ENCODE measurements at regions of chr7 and their contacts with region 1.

Region 1: DNA sequence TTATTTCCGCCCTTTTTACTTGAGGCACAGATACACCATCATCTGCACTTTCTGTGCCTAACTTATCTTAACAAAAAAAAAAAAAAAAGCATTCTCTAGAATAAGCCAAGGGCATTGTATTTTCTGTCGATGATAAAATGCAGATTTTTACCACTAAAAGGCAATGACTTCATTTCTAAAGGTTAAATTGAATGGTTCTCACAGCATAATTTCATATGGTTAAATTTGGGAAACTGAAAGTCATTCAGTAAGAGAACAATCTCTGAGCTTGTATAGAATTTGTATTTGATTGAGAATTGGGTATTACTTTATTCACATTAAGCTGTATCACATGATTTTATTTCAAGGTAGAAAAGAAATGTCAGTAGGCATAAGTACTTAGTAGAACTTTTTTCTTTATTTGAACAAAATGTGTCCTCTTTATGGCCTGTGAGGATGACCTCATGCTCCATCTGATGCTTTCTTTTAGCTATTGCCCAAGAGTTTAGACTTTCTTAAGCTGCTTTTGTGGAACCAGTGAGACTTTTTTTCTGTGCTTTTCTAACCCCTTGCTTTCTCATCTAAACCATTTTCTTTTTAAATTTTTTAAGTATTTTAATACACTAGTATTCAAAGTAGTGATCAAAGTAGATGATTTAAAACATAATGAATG is 110.3 kb downstream of the LRRC4 start:
- DNase-seq: no peak
- H3K4me3 Mint-ChIP-seq: no peak overlapping the region
- H3K27ac Mint-ChIP-seq: peak overlapping the region; percentile 19
- H3K4me1 Mint-ChIP-seq: peaks cover 16% of the 10 kb centered on the region
- H3K27me3 Mint-ChIP-seq: no peaks in the 10 kb centered on the region

Region 2: DNA sequence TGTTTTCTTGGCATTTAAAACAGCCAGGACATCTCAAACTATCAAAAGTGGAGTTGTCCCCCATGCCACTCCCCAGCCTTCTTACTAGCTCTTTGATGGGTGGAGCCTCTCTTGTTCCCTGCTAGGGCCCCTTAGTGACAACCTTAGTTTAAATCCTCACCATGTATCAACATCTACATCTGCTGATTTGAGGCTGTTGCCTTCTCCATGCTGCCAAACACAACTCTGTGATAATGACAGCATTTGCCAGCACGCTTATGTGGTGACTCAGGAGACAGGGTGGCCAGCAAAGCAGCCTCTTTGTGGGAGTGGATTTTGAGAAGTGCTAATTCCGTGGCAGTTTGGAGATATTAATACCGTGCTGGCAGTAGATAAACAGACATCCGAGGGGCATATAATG is 35.1 kb before region 1 on chr7:
- CTCF ChIA-PET with region 1: no interaction called
- POLR2A ChIA-PET with region 1: no interaction called
- intact Hi-C with region 1: no loop called
- DNase-seq: no peak
- H3K4me3 Mint-ChIP-seq: no peak overlapping the region
- H3K27ac Mint-ChIP-seq: no peak overlapping the region
- H3K4me1 Mint-ChIP-seq: peaks cover 21% of the 10 kb centered on the region
- H3K27me3 Mint-ChIP-seq: no peaks in the 10 kb centered on the region

Region 3: GRCh38 chr7:127905491-127906330 is 15.2 kb before region 1 on chr7:
- CTCF ChIA-PET with region 1: interaction called, 3 read pairs
- POLR2A ChIA-PET with region 1: interaction called, 3 read pairs
- intact Hi-C with region 1: loop called (anchors 2 kb)
- DNase-seq: peak; percentile 49
- H3K4me3 Mint-ChIP-seq: no peak overlapping the region
- H3K27ac Mint-ChIP-seq: peak overlapping the region; percentile 8
- H3K4me1 Mint-ChIP-seq: peaks cover 59% of the 10 kb centered on the region
- H3K27me3 Mint-ChIP-seq: no peaks in the 10 kb centered on the region

Region 4: GRCh38 chr7:127932076-127932475 is 11.2 kb after region 1 on chr7:
- CTCF ChIA-PET with region 1: no interaction called
- POLR2A ChIA-PET with region 1: no interaction called
- intact Hi-C with region 1: no loop called
- DNase-seq: no peak
- H3K4me3 Mint-ChIP-seq: no peak overlapping the region
- H3K27ac Mint-ChIP-seq: no peak overlapping the region
- H3K4me1 Mint-ChIP-seq: peaks cover 9% of the 10 kb centered on the region
- H3K27me3 Mint-ChIP-seq: no peaks in the 10 kb centered on the region

Measured in activated CD4-positive, alpha-beta memory T cell treated with anti-CD3 and anti-CD28 coated beads for 36 hours (primary cell).